Lower leg skin (tissue), 4 donors: ENCODE measurements at regions of chr12 and their contacts with region 1.

Region 1: GRCh38 chr12:120428597-120429229 is 9.2 kb upstream of the COX6A1 start:
- DNase-seq: no peak
- H3K4me3 ChIP-seq: no peak overlapping the region
- CTCF ChIP-seq: no peak
- POLR2A ChIP-seq: no peak

Region 2: GRCh38 chr12:120356567-120357030 is 72.1 kb before region 1 on chr12:
- intact Hi-C with region 1: loop called (anchors 2 kb)
- DNase-seq: peak; percentile 38 to 93
- H3K4me3 ChIP-seq: no peak overlapping the region
- CTCF ChIP-seq: peak in 1 of 3 donors; percentile 73
- POLR2A ChIP-seq: no peak

Region 3: DNA sequence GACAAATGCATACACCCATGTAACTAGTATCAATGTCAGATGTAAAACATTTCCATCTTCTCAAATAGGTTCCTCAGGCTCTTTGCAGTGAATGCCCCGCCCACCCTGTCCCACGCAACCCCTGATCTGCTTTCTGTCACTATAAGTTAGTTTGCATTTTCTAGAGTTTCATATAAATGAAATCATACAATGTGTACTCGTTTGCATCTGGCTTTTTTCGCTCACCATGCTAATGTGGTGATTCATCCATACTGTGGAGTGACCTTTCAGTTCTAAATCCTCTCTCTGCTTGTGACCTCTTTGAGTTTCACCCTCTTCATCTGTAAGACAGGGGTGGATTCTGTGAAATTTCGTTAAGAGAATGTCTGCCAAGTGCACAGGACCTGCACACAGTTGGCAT is 29.2 kb before region 1 on chr12:
- intact Hi-C with region 1: no loop called
- DNase-seq: no peak
- H3K4me3 ChIP-seq: no peak overlapping the region
- CTCF ChIP-seq: no peak
- POLR2A ChIP-seq: no peak